Naive thymus-derived CD4-positive, alpha-beta T cell (primary cell): ENCODE measurements at regions of chr3 and their contacts with region 1.

Region 1: DNA sequence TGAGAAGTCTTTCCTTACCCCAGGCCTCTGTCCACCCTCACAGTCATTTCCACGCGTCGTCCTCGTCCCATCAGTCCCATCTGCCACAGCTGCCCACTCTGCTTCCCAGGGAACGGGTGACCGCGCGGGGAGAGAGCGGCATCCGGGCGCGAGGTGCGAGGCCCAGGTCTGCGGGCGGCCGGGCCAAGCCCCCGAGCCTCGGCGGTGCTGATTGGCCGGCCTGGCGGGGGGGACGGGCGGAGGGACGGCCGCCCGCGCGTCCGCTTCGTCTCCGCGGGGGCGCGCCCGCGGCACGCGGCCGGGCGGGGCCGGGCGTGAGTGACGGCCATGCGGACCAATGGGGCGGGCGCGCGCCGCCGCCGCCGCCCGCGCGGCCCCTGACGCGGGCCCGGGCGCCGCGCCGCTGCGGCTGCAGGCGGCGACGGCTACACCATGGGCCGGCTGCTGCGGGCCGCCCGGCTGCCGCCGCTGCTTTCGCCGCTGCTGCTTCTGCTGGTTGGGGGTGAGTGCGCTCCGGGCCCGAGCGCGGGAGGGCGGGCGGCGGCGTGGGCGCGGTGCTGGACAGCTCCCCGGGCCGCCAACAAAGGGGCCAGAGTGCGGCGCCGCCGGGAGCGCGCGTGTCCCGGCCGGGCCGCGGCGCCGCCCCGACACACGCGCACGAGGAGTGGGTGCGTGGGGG is at the start of gene PODXL2:
- DNase-seq: peak in 8 of 9 donors; percentile 8 to 64 (median 27)
- ATAC-seq: peak; percentile 63
- H3K4me3 ChIP-seq: peak within 1 kb of the TSS; percentile 62
- H3K4me3 Mint-ChIP-seq: peak within 1 kb of the TSS; percentile 86 to 99 (median 90)
- H3K27ac ChIP-seq: no peak within 1 kb of the TSS
- H3K27ac Mint-ChIP-seq: peak within 1 kb of the TSS; percentile 36 to 86 (median 72)
- H3K4me1 ChIP-seq: peaks cover 10 to 15% of the 10 kb centered on the region in 2 donors
- H3K4me1 Mint-ChIP-seq: peaks cover 11 to 37% (median 27%) of the 10 kb centered on the region in 7 donors
- H3K27me3 ChIP-seq: peaks cover 0 to 3% of the 10 kb centered on the region in 2 donors
- H3K27me3 Mint-ChIP-seq: peaks cover 12 to 63% (median 32%) of the 10 kb centered on the region in 5 donors
- total RNA-seq, gene PODXL2: 2.2 to 5.5 (median 3.6) TPM

Region 2: GRCh38 chr3:127406309-127407025 is 222.5 kb before region 1 on chr3:
- CTCF ChIA-PET with region 1: no interaction called
- POLR2A ChIA-PET with region 1: no interaction called
- intact Hi-C with region 1: no loop called
- DNase-seq: peak in 1 of 9 donors; percentile 8
- ATAC-seq: no peak
- H3K4me3 ChIP-seq: no peak overlapping the region
- H3K4me3 Mint-ChIP-seq: no peak overlapping the region
- H3K27ac ChIP-seq: no peak overlapping the region
- H3K27ac Mint-ChIP-seq: no peak overlapping the region
- H3K4me1 ChIP-seq: no peaks in the 10 kb centered on the region
- H3K4me1 Mint-ChIP-seq: no peaks in the 10 kb centered on the region
- H3K27me3 ChIP-seq: no peaks in the 10 kb centered on the region
- H3K27me3 Mint-ChIP-seq: peaks cover 2 to 33% (median 27%) of the 10 kb centered on the region in 5 donors

Region 3: DNA sequence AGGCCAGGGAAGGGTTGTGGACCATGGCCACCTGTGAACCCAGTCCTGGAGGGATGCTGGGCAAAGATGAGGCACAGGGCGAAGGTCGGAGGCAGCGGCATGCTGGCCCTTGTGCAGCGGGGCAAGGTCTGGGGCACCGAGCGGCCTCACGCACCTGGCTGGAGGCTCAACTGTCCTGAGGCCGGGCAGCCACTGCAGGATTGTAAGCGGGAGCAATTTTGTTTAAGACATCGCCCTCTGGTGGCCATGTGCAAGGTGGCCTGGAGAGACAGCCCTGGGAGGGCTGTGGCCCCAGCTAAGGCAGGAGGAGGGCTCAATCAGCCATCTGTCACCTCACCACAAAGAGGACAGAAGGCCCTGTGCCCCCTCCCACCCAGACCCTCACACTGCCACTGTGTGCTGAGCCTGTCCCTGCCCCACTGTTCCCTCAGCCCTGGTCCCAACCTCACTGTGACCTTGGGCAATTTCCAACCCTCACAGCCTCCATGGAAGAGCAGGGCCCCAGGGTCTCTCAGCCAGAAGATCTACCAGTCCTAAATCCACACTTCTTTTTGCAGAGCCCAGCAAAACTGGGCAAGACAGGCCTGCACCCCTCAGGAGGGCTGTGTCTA is 84.6 kb before region 1 on chr3:
- CTCF ChIA-PET with region 1: no interaction called
- POLR2A ChIA-PET with region 1: no interaction called
- intact Hi-C with region 1: no loop called
- DNase-seq: peak; percentile 16 to 59 (median 43)
- ATAC-seq: peak; percentile 69
- H3K4me3 ChIP-seq: no peak overlapping the region
- H3K4me3 Mint-ChIP-seq: no peak overlapping the region
- H3K27ac ChIP-seq: no peak overlapping the region
- H3K27ac Mint-ChIP-seq: no peak overlapping the region
- H3K4me1 ChIP-seq: peaks cover 0 to 4% of the 10 kb centered on the region in 2 donors
- H3K4me1 Mint-ChIP-seq: peaks cover 4 to 13% (median 12%) of the 10 kb centered on the region in 7 donors
- H3K27me3 ChIP-seq: no peaks in the 10 kb centered on the region
- H3K27me3 Mint-ChIP-seq: peaks cover 0 to 14% (median 0%) of the 10 kb centered on the region in 5 donors

Region 4: GRCh38 chr3:127590593-127591477 is 38.1 kb before region 1 on chr3 and contains the start of gene TPRA1:
- CTCF ChIA-PET with region 1: no interaction called
- POLR2A ChIA-PET with region 1: no interaction called
- intact Hi-C with region 1: loop called in 1 of 2 experiments (anchors 1 kb)
- DNase-seq: peak; percentile 58 to 90 (median 85)
- ATAC-seq: peak; percentile 90
- H3K4me3 ChIP-seq: peak within 1 kb of the TSS; percentile 91
- H3K4me3 Mint-ChIP-seq: peak within 1 kb of the TSS; percentile 86 to 99 (median 96)
- H3K27ac ChIP-seq: peak within 1 kb of the TSS; percentile 80
- H3K27ac Mint-ChIP-seq: peak within 1 kb of the TSS; percentile 86 to 96 (median 94)
- H3K4me1 ChIP-seq: peaks cover 11 to 12% of the 10 kb centered on the region in 2 donors
- H3K4me1 Mint-ChIP-seq: peaks cover 14 to 51% (median 43%) of the 10 kb centered on the region in 7 donors
- H3K27me3 ChIP-seq: no peaks in the 10 kb centered on the region
- H3K27me3 Mint-ChIP-seq: no peaks in the 10 kb centered on the region
- total RNA-seq, gene TPRA1: 13.6 to 30.6 (median 24.5) TPM

Region 5: DNA sequence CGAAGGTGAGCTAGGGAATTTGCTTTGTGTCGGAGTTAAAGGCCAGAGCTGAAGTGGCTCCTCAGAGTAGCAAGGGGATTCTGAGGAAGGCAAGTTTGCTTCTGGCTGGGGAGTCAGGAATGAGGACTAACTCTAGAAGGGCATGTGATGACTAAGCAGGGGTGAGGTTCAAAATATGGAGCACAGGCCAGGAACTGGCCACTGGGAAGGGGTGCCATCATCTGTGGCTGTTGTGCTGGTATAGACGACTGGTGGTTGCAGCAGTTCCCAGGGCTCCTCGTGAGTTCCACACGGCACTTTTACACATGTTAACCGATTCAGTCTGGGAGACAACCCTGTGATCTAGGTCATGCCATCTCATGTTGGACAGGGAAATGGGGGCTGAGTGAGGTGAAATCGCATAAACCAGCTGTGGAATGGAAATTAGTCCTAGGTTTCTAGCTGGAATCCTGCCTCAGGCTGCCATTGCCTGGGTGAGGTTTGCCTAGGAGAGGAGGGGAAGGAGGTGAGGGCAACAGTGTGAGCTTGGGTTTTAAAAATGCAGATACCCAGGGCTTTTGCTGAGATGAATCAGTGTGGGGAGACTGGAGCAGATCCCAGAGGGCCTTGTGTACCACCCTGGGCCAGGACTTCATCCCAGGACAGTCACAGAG is 625.3 kb after region 1 on chr3:
- CTCF ChIA-PET with region 1: no interaction called
- POLR2A ChIA-PET with region 1: no interaction called
- intact Hi-C with region 1: no loop called
- DNase-seq: no peak
- ATAC-seq: no peak
- H3K4me3 ChIP-seq: no peak overlapping the region
- H3K4me3 Mint-ChIP-seq: no peak overlapping the region
- H3K27ac ChIP-seq: no peak overlapping the region
- H3K27ac Mint-ChIP-seq: peak overlapping the region in 3 of 9 donors; percentile 54 to 84 (median 64)
- H3K4me1 ChIP-seq: no peaks in the 10 kb centered on the region
- H3K4me1 Mint-ChIP-seq: peaks cover 0 to 68% (median 61%) of the 10 kb centered on the region in 7 donors
- H3K27me3 ChIP-seq: no peaks in the 10 kb centered on the region
- H3K27me3 Mint-ChIP-seq: no peaks in the 10 kb centered on the region